ENCODE measurements at regions of chr10 and their contacts with region 1.

Region 1: GRCh38 chr10:35184527-35185171 is 58.0 kb downstream of the CREM start:
- DNase-seq: peak; percentile 10
- H3K4me3 ChIP-seq: no peak overlapping the region
- H3K27ac ChIP-seq: no peak overlapping the region
- H3K4me1 ChIP-seq: peaks cover 9% of the 10 kb centered on the region
- CTCF ChIP-seq: no peak

Region 2: DNA sequence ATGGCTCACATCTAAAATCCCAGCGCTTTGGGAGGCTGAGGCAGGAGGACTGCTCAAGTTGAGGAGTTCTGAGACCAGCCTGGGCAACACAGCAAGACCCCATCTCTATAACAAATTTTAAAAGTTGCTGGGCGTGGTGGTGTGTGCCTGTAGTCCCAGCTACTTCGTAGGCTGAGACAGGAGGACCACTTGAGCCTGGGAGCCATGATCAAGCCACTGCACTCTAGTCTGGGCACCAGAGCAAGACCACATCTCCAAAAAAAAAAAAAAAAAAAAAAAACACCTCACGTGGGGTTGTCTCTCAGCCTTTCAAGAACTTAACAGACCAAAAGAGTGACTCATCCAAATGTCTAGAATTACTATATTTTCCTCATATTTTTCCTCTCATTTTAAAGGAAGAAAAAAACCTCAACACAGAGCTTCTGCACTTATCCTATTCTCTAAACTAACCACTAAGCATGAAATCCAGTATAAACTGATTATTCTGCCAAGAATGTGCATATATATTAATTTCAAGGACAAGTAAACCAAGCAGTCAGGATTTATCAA is 140.8 kb before region 1 on chr10:
- CTCF ChIA-PET with region 1: no interaction called
- POLR2A ChIA-PET with region 1: interaction called, 10 read pairs
- intact Hi-C with region 1: no loop called
- DNase-seq: no peak
- H3K4me3 ChIP-seq: no peak overlapping the region
- H3K27ac ChIP-seq: no peak overlapping the region
- H3K4me1 ChIP-seq: no peaks in the 10 kb centered on the region
- CTCF ChIP-seq: no peak